ENCODE measurements at regions of chr5 and their contacts with region 1.

Region 1: DNA sequence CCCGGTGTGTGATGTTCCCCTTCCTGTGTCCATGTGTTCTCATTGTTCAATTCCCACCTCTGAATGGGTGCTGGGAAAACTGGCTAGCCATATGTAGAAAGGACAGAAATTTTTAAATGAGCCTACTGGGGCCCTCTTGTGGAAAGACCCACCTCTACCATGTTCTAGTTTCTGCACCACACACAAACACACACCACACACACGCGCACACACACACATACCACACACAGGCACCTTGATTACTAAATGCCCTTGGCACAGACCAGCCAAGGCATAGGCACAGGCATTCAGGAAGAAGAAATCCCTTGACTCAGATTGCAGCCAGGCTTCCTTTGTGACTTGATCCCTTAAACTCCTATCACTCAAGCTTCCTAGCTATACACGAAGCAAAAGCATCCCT is 60.5 kb downstream of the SIL1 start:
- DNase-seq: peak; percentile 51
- H3K4me3 ChIP-seq: no peak overlapping the region
- H3K27ac ChIP-seq: no peak overlapping the region
- H3K4me1 ChIP-seq: peaks cover 11% of the 10 kb centered on the region
- H3K27me3 ChIP-seq: no peaks in the 10 kb centered on the region
- CTCF ChIP-seq: peak; percentile 24 to 38
- POLR2A ChIP-seq: no peak

Region 2: GRCh38 chr5:138844812-138845513 is 292.7 kb before region 1 on chr5:
- CTCF ChIA-PET with region 1: no interaction called
- POLR2A ChIA-PET with region 1: no interaction called
- dilution Hi-C with region 1: no loop called
- intact Hi-C with region 1: no loop called
- DNase-seq: peak; percentile 74
- H3K4me3 ChIP-seq: no peak overlapping the region
- H3K27ac ChIP-seq: peak overlapping the region; percentile 62
- H3K4me1 ChIP-seq: peaks cover 33% of the 10 kb centered on the region
- H3K27me3 ChIP-seq: no peaks in the 10 kb centered on the region
- CTCF ChIP-seq: no peak
- POLR2A ChIP-seq: no peak

Region 3: GRCh38 chr5:139262742-139263445 is 125.2 kb after region 1 on chr5:
- CTCF ChIA-PET with region 1: interaction called, 11 read pairs
- POLR2A ChIA-PET with region 1: no interaction called
- dilution Hi-C with region 1: no loop called
- intact Hi-C with region 1: no loop called
- DNase-seq: peak; percentile 87
- H3K4me3 ChIP-seq: no peak overlapping the region
- H3K27ac ChIP-seq: no peak overlapping the region
- H3K4me1 ChIP-seq: no peaks in the 10 kb centered on the region
- H3K27me3 ChIP-seq: peaks cover 2 to 10% of the 10 kb centered on the region in 2 experiments
- CTCF ChIP-seq: peak; percentile 87 to 88
- POLR2A ChIP-seq: no peak

Measured in endothelial cell of umbilical vein (primary cell).